ENCODE measurements at regions of chr12 and their contacts with region 1.

Region 1: DNA sequence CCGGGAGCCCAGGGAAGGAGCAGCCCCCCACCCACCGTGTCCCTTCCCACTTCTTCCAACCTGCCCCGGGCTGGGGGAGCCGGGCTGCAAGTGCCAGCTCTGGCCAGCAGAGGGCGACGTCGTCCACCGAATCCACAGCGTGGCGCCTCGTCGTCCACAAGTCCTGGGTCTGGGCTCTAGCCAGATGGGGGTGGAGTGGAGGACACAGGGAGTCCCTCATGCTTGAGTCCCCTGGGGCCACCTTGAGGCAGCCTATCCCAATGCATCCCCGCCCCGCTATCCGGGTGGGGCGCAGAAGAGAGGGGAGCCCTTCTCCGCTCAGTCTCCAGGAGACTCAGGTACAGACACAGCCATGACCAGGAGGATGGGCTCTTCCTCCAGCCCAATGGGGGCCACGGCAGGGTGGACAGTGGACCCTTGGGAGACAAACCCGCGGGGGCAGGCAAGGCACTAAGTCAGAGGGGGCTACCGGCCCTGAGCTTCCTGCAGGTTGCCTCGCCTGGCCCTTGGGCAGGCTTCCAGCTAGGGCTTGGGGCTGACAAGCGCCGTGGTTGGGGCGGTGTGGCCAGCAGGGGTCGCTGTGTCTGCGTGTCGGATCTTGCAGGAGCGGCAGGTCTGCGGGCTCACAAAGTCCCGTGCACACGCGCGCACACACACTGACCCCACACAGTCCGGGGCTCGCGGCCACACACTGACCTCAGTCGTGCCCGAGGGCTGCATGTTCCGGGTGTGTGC is 5.5 kb downstream of the AQP5 start:
- DNase-seq: peak; percentile 95

Region 2: DNA sequence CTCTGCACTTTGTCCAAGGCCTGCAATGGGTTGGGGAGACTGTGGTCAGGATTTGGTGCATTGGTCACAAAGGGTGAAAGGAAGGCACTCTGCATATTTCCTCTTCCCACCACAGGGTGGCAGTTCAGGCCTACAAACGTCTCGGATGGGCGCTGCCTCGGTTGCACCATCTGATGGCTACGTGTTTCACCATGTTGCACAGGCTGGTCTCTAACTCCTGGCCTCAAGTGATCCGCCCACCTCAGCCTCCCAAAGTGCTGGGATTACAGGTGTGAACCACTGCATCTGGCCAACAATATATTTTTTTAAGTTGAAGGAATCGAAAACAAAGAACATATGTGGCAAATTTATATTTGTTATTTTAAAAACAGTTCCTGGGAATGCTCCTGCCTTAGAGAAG is 190.8 kb before region 1 on chr12:
- intact Hi-C with region 1: loop called (anchors 10 kb)
- DNase-seq: no peak

Region 3: GRCh38 chr12:49866859-49867579 is 100.2 kb before region 1 on chr12:
- intact Hi-C with region 1: loop called (anchors 2 kb)
- DNase-seq: peak; percentile 88

Region 4: GRCh38 chr12:50055831-50056638 is 88.8 kb after region 1 on chr12:
- intact Hi-C with region 1: loop called (anchors 2 kb)
- DNase-seq: no peak

Region 5: DNA sequence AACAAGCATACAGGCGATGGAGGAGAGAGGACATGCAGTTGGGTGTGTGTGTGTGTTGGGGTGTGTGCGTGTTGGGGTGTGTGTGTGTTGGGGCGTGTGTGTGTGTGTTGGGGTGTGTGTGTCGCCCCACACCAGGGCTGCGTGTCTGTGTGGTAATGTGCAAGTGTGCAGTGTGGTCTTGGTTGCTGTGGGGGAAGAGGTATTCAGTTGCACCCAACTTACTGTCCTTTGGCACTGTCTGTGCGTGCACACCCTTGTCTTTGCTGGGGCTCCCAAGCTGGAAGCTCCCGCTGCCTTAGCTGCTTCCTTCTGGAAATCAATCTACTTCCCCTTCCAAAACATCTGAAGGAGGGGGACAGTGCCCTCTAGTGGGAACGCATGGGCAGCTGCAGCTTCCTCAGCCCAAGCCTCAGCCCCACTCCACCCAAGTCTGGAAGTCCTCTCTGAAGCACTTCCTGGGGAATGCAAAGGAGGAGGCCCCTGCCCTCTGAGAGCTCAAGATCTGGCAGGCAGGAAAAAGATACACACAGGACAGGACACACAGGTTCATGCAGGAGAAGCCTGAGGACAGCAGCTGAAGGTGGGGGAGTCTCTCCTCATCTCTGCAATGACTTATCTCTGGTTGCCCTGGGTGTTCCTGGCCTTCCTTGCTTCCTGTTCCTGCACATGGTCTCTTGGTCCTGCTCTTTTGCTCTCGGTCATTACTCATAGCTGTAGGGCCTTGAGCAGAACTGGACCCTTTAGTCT is 103.3 kb after region 1 on chr12:
- intact Hi-C with region 1: loop called (anchors 2 kb)
- DNase-seq: peak; percentile 90

Measured in cardiac septum (tissue), 1 donor.